ENCODE measurements at regions of chr19 and their contacts with region 1.

Region 1: GRCh38 chr19:3108775-3109174 is 14.6 kb downstream of the GNA11 start:
- DNase-seq: peak; percentile 69 to 81 (median 73)
- H3K4me3 ChIP-seq: no peak overlapping the region
- H3K27ac ChIP-seq: no peak overlapping the region
- H3K4me1 ChIP-seq: peaks cover 0 to 27% (median 5%) of the 10 kb centered on the region in 4 experiments
- H3K27me3 ChIP-seq: no peaks in the 10 kb centered on the region

Region 2: GRCh38 chr19:2950286-2951124 is 158.3 kb before region 1 on chr19:
- CTCF ChIA-PET with region 1: interaction called, 134 read pairs
- POLR2A ChIA-PET with region 1: no interaction called
- DNase-seq: peak; percentile 100
- H3K4me3 ChIP-seq: peak overlapping the region; percentile 70 to 93 (median 84)
- H3K27ac ChIP-seq: peak overlapping the region; percentile 87 to 97
- H3K4me1 ChIP-seq: peaks cover 9 to 22% (median 11%) of the 10 kb centered on the region in 4 experiments
- H3K27me3 ChIP-seq: no peaks in the 10 kb centered on the region

Region 3: DNA sequence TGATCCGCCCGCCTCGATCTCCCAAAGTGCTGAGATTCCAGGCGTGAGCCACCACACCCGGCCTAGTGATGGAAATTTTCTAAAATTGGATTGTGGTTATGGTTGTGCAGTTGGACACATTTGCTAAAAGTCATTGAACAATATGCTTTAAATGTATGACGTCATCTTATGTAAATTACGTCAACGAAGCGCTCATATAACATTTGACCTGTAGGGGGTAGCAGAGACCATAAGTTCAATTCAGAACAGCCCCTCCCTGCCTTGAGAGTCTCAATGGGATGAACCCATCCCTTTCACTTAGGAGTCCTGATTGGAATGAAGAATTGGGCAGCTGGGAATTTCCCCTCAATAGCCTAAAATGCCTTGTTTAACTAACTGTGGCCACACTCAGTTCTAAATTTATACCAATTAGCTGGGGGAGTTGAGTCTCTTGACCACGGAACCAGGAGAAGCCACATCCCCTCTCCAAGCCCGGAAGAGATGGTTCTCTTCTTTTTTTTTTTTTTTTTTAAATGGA is 146.7 kb before region 1 on chr19:
- CTCF ChIA-PET with region 1: interaction called, 134 read pairs
- POLR2A ChIA-PET with region 1: no interaction called
- DNase-seq: peak; percentile 86 to 91 (median 87)
- H3K4me3 ChIP-seq: peak overlapping the region in 2 of 7 experiments; percentile 58 to 74
- H3K27ac ChIP-seq: no peak overlapping the region
- H3K4me1 ChIP-seq: peaks cover 0 to 3% (median 0%) of the 10 kb centered on the region in 4 experiments
- H3K27me3 ChIP-seq: no peaks in the 10 kb centered on the region

Region 4: GRCh38 chr19:3075895-3076431 is 32.8 kb before region 1 on chr19:
- CTCF ChIA-PET with region 1: interaction called, 124 read pairs
- POLR2A ChIA-PET with region 1: interaction called, 3 read pairs
- DNase-seq: peak; percentile 45 to 68 (median 64)
- H3K4me3 ChIP-seq: peak overlapping the region in 3 of 7 experiments; percentile 15 to 55 (median 48)
- H3K27ac ChIP-seq: no peak overlapping the region
- H3K4me1 ChIP-seq: peaks cover 0 to 7% (median 3%) of the 10 kb centered on the region in 4 experiments
- H3K27me3 ChIP-seq: peaks cover 0 to 4% (median 0%) of the 10 kb centered on the region in 5 experiments

Region 5: GRCh38 chr19:3094601-3095437 is 14.0 kb before region 1 on chr19:
- CTCF ChIA-PET with region 1: interaction called, 12 read pairs
- POLR2A ChIA-PET with region 1: no interaction called
- DNase-seq: peak in 2 of 3 donors; percentile 66 to 72
- H3K4me3 ChIP-seq: peak overlapping the region; percentile 34 to 85 (median 67)
- H3K27ac ChIP-seq: peak overlapping the region in 1 of 2 experiments; percentile 51
- H3K4me1 ChIP-seq: peaks cover 0 to 44% (median 39%) of the 10 kb centered on the region in 4 experiments
- H3K27me3 ChIP-seq: peaks cover 0 to 10% (median 0%) of the 10 kb centered on the region in 5 experiments

Measured in common myeloid progenitor, CD34-positive (primary cell).